Activated CD4-positive, alpha-beta T cell treated with anti-CD3 and anti-CD28 coated beads for 36 hours (primary cell): ENCODE measurements at regions of chr6 and their contacts with region 1.

Region 1: GRCh38 chr6:42661540-42662153 is 60.8 kb downstream of the PRPH2 start:
- DNase-seq: peak; percentile 90
- ATAC-seq: peak; percentile 91
- H3K4me3 Mint-ChIP-seq: no peak overlapping the region
- H3K27ac Mint-ChIP-seq: no peak overlapping the region
- H3K4me1 Mint-ChIP-seq: no peaks in the 10 kb centered on the region
- H3K27me3 Mint-ChIP-seq: no peaks in the 10 kb centered on the region

Region 2: DNA sequence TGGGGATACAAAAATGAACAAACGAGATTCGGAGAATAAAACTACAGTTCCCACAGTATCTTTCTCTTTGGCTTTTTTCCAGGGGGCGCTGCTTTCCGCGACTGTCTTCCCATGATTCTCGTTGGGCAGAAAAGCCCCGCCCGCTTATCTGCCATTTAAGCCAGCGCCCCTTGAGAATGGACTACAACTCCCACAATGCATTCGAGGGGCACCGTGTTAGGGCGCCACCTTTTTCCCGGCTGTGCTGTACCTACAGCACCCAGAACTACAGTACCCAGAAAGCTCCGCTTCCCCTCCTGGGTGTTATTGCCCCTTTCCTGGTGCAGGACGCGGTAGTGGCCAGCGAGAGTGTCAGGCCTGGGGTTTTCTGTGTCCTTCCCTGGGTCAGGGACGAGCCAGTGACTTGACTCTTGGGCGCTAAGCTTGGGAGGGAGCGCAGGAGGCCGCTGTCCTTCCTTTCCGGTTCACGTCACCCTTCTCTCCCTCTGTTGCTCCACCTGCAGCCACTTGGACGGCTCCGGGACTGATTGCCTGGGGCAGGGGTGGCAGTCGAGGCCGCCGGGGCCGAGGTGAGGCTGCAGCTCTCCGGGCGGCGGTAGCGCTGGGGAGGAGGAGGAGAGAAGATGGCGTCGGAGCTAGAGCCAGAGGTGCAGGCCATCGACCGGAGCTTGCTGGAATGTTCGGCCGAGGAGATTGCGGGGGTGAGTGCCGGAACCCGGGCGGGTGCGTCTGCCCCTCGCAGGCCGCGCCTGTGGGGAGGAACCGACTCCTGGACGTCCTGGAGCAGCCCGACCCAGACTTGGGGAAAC is 97.7 kb before region 1 on chr6 and contains the start of gene UBR2:
- CTCF ChIA-PET with region 1: no interaction called
- POLR2A ChIA-PET with region 1: no interaction called
- intact Hi-C with region 1: no loop called
- DNase-seq: peak; percentile 97
- ATAC-seq: peak; percentile 97
- H3K4me3 Mint-ChIP-seq: peak within 1 kb of the TSS; percentile 97
- H3K27ac Mint-ChIP-seq: peak within 1 kb of the TSS; percentile 95
- H3K4me1 Mint-ChIP-seq: peaks cover 31% of the 10 kb centered on the region
- H3K27me3 Mint-ChIP-seq: no peaks in the 10 kb centered on the region
- total RNA-seq, gene UBR2: 23.9 to 28.1 TPM

Region 3: DNA sequence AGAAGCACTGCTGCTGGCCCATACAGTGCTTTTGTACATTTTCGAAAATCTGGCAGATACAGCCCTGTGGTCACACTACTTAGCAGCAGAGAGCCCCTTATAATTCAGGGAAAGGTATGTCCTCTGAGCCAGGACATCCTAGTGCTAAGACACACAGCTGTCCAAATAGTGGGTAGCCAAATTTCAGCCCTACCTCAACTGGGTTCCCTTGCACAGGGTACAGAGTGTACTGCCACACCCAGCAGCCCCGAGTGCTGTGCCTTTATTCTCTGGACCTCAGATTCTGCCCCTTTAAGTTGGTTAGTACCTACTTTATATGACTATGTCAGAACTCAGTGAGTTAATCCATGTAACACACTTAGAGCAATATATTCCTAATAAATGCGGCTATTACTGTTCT is 13.1 kb after region 1 on chr6:
- CTCF ChIA-PET with region 1: interaction called, 15 read pairs
- POLR2A ChIA-PET with region 1: no interaction called
- intact Hi-C with region 1: no loop called
- DNase-seq: no peak
- ATAC-seq: no peak
- H3K4me3 Mint-ChIP-seq: no peak overlapping the region
- H3K27ac Mint-ChIP-seq: no peak overlapping the region
- H3K4me1 Mint-ChIP-seq: peaks cover 11% of the 10 kb centered on the region
- H3K27me3 Mint-ChIP-seq: no peaks in the 10 kb centered on the region

Region 4: DNA sequence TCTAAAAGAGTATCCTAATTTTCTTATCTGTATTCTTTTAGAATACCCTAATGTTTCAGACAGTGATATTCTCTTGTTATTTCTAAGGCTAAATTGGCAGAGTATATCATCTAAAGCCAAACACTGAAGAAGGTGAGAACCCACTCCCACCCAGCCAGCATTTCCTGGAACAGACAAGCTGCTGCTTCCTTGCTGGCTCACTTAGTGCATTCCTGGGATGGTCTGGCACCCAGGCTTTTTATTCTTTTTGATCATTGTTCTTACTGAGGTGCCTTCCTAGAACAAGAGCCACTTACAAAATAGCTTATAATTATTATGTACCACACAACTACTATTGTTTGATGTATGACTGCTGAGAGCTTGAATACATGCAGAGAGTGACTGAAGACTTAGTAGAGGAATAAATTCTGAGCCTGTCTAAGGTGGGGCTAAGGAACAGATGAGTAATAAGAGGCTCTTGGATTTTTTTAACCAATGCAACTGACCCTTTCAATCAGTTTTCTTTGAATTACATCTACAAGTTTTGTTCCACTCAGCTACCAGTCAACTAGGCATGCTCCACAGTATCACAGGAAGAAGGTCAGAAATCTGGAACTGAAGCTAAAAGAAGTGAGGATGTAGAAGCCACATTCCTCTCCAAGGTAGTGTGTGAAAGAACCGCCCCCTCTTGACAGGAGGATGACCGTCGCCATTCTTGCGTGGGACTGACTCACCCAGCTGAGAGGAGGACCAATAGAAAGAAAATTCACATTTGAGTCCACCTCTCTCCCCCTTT is 30.7 kb after region 1 on chr6:
- CTCF ChIA-PET with region 1: interaction called, 25 read pairs
- POLR2A ChIA-PET with region 1: no interaction called
- intact Hi-C with region 1: no loop called
- DNase-seq: peak; percentile 26
- ATAC-seq: peak; percentile 52
- H3K4me3 Mint-ChIP-seq: no peak overlapping the region
- H3K27ac Mint-ChIP-seq: peak overlapping the region; percentile 29
- H3K4me1 Mint-ChIP-seq: peaks cover 23% of the 10 kb centered on the region
- H3K27me3 Mint-ChIP-seq: no peaks in the 10 kb centered on the region

Region 5: DNA sequence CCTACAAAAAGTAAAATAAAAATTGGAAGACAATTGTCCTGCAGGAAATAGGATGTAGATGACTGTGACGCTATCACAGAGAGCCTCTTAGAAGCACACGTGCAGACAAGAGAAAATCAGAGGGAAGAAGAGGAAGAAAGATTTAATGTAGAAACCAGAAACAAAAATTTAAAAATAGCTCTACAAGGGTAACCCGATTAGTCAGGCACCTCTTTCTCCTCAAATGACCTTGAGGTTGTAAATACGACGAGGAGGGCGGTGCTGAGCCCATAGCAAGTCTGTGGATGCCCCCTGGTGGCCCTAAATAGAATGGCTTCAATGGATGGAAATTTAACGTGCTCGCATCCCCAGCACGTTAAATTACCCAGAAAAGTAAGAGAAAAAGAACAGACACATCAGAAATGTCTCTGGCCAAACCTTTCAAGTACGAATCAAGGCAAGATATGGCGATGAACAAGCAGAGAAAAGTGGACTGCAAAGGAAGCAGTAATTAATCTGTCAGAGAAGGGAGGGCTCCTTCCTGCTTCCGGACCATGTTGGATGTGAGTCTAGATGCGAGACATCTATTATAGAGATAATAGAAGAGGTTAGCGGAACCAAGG is 64.9 kb after region 1 on chr6:
- CTCF ChIA-PET with region 1: interaction called, 54 read pairs
- POLR2A ChIA-PET with region 1: interaction called, 3 read pairs
- intact Hi-C with region 1: loop called (anchors 1 kb)
- DNase-seq: peak; percentile 85
- ATAC-seq: peak; percentile 98
- H3K4me3 Mint-ChIP-seq: peak overlapping the region; percentile 69
- H3K27ac Mint-ChIP-seq: peak overlapping the region; percentile 95
- H3K4me1 Mint-ChIP-seq: peaks cover 19% of the 10 kb centered on the region
- H3K27me3 Mint-ChIP-seq: no peaks in the 10 kb centered on the region

Region 6: GRCh38 chr6:42896178-42896719 is 234.6 kb after region 1 on chr6:
- CTCF ChIA-PET with region 1: interaction called, 21 read pairs
- POLR2A ChIA-PET with region 1: no interaction called
- intact Hi-C with region 1: loop called (anchors 1 kb)
- DNase-seq: no peak
- ATAC-seq: no peak
- H3K4me3 Mint-ChIP-seq: no peak overlapping the region
- H3K27ac Mint-ChIP-seq: no peak overlapping the region
- H3K4me1 Mint-ChIP-seq: peaks cover 4% of the 10 kb centered on the region
- H3K27me3 Mint-ChIP-seq: no peaks in the 10 kb centered on the region